ENCODE measurements at regions of chr5 and their contacts with region 1.

Region 1: GRCh38 chr5:149357370-149358293 is at the start of gene PCYOX1L:
- DNase-seq: peak; percentile 86
- H3K4me3 ChIP-seq: peak within 1 kb of the TSS; percentile 72
- CTCF ChIP-seq: no peak

Region 2: DNA sequence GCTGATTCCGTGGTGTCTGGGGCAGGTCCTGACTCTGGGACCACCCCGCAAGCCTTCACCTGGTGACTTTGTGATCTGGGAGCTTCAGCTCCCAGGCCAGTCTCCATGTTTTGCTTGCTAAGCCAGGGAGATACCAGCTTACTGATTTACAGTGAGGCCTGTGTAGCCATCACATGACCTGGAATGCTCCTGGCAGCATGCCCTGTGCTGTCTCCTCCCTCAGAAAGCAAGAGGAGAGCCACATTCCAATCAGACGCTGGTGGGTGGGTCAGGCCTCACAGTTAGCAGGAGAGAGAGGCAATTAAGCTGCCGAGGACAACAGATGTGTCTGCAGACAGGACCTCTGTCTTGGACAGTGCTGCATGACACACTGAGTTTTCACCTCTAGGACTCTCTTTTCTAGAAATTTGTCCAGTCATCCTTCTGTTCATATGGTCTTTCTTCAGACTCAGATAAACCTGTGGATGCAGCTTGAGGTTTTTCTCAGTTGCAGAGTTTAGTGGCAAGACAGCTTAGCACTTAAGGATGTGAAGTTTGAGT is 36.8 kb before region 1 on chr5:
- in situ Hi-C with region 1: loop called (anchors 5 kb)
- DNase-seq: peak; percentile 82
- H3K4me3 ChIP-seq: no peak overlapping the region
- CTCF ChIP-seq: no peak

Region 3: DNA sequence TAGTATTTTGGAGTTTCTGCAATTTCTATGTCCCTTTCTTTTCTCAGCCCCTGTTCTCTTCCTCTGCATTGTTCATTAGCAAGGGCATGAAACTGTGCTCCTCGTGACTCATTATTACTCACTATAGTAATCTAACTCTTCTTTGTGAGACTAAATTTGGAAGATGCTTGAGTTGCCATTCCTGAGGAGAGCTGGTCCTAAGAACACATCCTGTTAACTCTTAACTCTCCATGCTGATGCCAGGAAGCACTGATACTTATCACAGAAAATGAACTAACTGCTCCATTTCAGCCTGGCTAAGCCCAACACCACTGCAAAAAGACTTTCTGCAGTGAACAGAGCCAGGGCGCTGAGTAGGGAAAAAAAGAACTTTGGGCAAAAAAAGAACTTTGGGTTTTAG is 204.2 kb after region 1 on chr5:
- in situ Hi-C with region 1: no loop called
- DNase-seq: peak; percentile 93
- H3K4me3 ChIP-seq: no peak overlapping the region
- CTCF ChIP-seq: no peak